Activated CD8-positive, alpha-beta T cell treated with anti-CD3 and anti-CD28 coated beads for 36 hours (primary cell): ENCODE measurements at regions of chr9 and their contacts with region 1.

Region 1: DNA sequence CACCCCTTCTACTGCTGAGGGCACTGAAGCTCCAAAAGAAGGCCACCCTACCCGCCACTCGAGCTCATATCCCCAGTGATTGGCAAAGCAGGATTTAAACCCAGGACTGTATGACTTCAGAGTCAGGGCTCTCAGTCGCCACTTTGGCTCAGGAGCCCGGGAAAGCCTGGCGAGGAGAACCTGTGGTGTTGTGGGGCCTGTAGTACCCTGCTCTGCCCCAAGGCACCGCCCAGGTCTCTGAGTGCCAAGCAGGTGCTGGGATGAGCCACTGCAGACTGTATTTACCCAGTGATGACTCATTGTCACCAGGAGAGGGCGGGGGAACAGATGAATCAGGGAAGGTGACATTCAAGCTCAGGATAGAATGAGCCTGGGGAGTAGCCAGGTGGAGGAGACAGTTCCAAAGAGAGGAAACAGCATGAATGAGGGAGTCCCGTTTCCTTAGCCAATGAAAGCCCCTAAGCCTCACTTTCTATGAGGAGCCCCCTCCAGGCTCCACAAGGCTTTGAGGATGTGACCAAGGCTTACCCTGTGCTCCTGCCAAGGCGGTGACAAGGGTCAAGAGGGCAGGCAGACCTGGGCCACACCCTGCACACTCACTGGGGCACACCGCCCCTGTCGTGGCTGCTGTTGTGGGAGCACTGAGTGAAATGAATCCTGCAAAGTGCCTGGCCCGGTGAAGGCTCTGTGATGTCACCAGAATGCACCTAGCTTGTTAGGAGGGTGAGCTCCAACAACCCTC is 17.8 kb upstream of the DPM2 start:
- DNase-seq: peak; percentile 96
- ATAC-seq: peak; percentile 90
- H3K4me3 Mint-ChIP-seq: peak overlapping the region; percentile 46
- H3K27ac Mint-ChIP-seq: peak overlapping the region; percentile 88
- H3K4me1 Mint-ChIP-seq: peaks cover 80% of the 10 kb centered on the region
- H3K27me3 Mint-ChIP-seq: no peaks in the 10 kb centered on the region
- CTCF ChIP-seq: peak; percentile 68

Region 2: DNA sequence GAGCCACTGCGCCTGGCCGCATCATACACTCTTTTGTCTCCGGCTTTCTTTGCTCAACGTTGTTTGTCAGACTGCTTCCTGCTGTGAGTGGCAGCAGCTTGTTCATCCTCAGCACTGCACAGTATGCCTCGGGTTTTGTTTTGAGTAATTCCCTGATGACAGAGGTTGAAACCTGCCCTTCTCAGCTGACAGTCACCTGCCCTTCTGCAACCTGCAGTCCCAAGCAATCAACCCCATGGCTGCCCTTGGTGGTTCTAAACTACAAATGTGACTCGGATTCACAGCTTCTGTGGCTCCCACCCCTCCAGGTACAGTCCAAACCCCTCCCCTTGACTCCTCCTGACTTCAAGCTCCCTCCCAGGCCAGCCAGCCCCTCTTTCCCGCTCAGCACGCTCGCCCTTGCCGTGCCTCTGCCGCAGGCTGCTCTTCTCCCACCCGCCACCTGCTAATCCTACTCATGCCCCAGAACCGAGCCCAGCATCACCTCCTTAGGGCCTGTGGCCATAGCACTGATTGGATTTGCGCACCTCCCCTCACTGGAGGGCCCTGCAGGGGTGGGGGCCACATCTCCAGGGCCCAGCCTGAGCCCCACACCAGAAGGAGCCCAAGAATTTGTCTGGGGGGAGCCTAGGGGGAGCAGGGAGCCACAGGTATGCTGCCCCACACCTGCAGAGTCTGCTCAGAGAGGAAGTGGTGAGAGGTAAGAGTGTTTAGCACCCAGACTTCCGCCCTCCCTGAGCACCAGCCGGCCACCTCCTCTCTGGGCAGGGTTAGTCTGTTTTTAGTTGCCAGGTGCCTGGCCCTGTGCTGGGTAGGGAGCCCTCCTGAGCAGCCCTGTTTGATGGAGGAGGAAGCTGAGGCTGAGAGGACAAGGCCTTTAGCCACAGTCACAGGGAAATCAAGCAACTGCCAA is 15.2 kb after region 1 on chr9:
- CTCF ChIA-PET with region 1: interaction called, 163 read pairs
- POLR2A ChIA-PET with region 1: interaction called, 408 read pairs
- intact Hi-C with region 1: no loop called
- DNase-seq: peak; percentile 90
- ATAC-seq: peak; percentile 73
- H3K4me3 Mint-ChIP-seq: peak overlapping the region; percentile 97
- H3K27ac Mint-ChIP-seq: peak overlapping the region; percentile 99
- H3K4me1 Mint-ChIP-seq: peaks cover 94% of the 10 kb centered on the region
- H3K27me3 Mint-ChIP-seq: no peaks in the 10 kb centered on the region
- CTCF ChIP-seq: no peak